Activated T-helper 1 cell treated with anti-CD3 and anti-CD28 coated beads, Interleukin-12 subunit alpha, Interleukin-12 subunit beta, Interleukin-2, Interleukin-4 antibody, amounts not matched to agents 30 ng/mL and 10 ng/mL and 1 ng/mL, durations not matched to agents 14 hours and 24 hours and 36 hours (primary cell): ENCODE measurements at regions of chr1 and their contacts with region 1.

Region 1: DNA sequence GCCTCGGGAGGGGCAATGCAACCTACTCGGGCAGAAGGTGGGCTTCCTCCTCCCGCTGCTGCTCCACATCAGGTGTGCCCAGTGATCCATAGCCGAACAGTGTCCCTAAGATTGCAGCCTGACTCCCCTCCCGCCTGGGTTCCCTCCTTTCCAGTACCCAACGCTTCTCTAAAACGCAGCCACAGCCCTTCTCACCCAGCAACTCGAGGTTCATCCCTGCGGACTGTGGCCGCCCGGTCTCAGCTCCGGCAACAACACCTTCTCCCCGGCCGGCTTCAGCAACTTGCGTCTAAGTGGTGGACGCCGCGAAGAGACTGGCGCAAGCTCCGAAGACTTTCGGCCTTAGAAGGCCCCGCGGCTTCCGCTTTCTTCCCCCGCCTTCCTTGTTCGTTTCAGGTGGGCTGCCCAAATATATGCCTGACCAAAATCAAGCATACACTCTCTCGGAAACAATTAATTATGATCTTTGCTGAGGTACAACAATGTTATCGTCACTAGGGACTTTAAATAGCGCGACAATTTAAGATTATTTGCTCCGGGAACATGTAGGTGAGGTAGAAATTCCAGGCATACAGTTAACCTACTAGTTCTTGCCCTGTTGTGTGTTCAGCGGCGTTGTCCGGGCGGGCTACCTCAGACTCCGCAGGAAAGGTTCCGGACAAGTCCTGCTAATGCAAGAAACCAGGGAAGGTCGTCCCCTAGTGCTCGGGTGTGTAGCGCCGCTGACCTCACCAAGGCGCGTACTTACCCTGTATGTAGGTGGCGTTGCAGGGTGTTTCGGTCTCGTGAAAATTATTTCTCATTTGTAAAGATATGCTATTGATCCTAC is at the start of gene RBBP5:
- DNase-seq: peak; percentile 92
- H3K4me3 Mint-ChIP-seq: peak within 1 kb of the TSS; percentile 98
- H3K27ac Mint-ChIP-seq: peak within 1 kb of the TSS; percentile 98
- H3K4me1 Mint-ChIP-seq: peaks cover 39% of the 10 kb centered on the region
- H3K27me3 Mint-ChIP-seq: no peaks in the 10 kb centered on the region
- total RNA-seq, gene RBBP5: 21.5 and 24.7 TPM in 2 replicates

Region 2: DNA sequence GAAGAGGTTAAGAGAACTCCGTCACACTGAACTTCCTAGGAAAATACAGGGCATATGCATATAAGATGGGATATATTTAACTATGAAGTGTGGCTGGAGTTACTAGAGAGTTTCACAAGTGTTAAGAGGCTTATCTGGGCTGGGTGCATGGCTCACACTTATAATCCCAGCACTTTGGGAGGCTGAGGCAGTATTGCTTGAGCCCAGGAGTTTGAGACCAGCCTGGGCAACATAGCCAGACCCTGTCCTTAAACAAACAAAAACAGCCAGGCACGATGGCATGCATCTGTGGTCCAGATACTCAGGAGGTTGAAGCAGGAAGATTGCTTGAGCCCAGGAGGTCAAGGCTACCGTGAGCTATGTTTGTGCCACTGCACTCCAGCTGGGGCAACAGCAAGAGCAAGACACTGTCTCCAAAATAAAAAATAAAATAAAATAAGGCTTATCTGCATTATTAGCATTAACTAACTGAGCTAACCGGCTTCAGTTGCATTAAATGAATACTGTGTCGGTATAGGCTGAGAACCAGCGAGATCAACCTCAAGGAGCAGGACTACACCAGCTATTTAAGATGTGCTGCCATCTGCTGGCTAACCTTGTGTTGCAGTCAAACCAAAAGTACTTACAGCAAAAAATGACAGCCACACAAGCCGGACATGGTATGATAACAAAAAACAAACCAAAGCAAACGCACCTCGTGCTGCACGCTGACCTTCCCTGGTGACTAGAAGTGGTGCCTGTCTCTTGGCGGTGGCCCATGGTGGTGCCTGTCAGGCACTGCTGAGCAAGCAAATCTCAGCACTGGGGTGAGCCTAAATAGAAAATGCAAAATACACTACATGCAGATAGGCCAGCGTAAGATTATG is 19.6 kb after region 1 on chr1:
- intact Hi-C with region 1: loop called (anchors 1 kb)
- DNase-seq: peak; percentile 59
- H3K4me3 Mint-ChIP-seq: no peak overlapping the region
- H3K27ac Mint-ChIP-seq: no peak overlapping the region
- H3K4me1 Mint-ChIP-seq: peaks cover 9% of the 10 kb centered on the region
- H3K27me3 Mint-ChIP-seq: no peaks in the 10 kb centered on the region

Region 3: DNA sequence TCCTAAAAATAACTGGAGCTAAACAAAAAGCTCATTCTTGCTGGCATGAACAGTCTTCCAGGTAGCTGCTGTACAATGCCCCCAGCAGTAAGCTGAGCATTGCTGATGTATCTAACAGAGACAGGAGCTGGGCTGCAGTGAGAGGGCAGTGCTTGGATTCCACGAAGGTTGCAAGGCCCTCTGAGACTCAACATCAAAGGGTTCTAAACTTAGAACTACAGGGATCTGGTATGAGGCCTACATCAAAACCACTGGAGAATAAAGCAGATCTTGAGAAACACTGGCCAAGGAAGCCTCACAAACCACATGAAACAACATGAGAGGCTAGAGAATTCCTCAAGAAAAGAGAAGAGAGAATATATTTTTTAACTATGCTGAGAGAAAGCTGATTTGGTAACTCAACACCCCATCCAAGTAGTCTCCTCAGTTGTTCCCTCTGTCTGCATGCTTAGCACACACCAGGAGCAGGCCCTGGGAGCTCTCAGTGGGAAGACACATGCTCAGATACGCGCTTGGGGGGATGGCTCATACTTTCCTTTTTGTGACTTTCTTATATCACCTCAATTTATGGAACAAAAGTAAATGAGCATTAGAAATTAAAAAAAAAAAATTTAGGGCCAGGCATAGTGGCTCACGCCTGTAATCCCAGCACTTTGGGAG is 61.9 kb after region 1 on chr1:
- intact Hi-C with region 1: no loop called
- DNase-seq: no peak
- H3K4me3 Mint-ChIP-seq: no peak overlapping the region
- H3K27ac Mint-ChIP-seq: peak overlapping the region; percentile 51
- H3K4me1 Mint-ChIP-seq: peaks cover 71% of the 10 kb centered on the region
- H3K27me3 Mint-ChIP-seq: no peaks in the 10 kb centered on the region

Region 4: DNA sequence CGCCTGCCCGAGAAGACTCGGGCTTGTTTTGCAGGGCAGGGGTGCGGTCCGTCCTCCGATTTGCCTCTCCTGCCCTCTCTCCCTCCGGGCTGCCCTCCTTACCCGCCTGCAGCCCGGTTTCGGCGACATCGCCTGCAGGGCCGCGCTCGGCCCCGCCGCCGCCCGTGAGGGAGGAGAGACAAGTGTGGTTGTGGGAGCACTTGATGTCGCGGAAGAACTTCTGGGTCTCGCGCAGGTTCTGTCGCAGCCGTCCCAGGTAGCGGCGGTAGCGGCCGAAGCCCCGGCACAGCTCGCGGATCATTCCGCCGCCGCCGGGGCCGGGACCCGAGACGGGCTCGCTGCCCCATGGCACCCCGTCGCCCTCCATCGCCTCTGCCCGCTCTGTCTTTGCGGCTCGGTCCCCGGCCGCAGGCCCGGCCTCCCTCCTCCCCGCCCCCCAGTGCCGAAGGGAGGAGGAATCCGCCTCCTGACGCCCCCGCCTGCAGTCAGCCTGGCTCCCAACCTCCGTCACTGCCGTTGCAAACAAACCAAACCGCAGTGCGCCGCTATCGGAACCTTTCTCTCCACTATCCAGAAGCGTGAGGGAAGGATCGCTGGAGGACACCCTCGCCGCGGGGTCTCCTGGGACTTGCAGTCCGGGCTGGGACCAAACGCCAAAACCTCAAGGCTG is 89.4 kb after region 1 on chr1 and contains the start of gene DSTYK:
- intact Hi-C with region 1: loop called (anchors 1 kb)
- DNase-seq: peak; percentile 89
- H3K4me3 Mint-ChIP-seq: peak within 1 kb of the TSS; percentile 99
- H3K27ac Mint-ChIP-seq: peak within 1 kb of the TSS; percentile 94
- H3K4me1 Mint-ChIP-seq: peaks cover 49% of the 10 kb centered on the region
- H3K27me3 Mint-ChIP-seq: no peaks in the 10 kb centered on the region
- total RNA-seq, gene DSTYK: 34.2 and 35.9 TPM in 2 replicates

Region 5: GRCh38 chr1:205313563-205314308 is 191.9 kb after region 1 on chr1:
- intact Hi-C with region 1: loop called (anchors 5 kb)
- DNase-seq: peak; percentile 21
- H3K4me3 Mint-ChIP-seq: peak overlapping the region; percentile 83
- H3K27ac Mint-ChIP-seq: peak overlapping the region; percentile 94
- H3K4me1 Mint-ChIP-seq: peaks cover 84% of the 10 kb centered on the region
- H3K27me3 Mint-ChIP-seq: no peaks in the 10 kb centered on the region